Panc1 (cell line): ENCODE measurements at regions of chr6 and their contacts with region 1.

Region 1: GRCh38 chr6:34070315-34071135 is 75.4 kb downstream of the GRM4 start:
- DNase-seq: no peak
- ATAC-seq: 0 out of 2 replicates have a peak, but pooled peaks have one; percentile 21
- H3K4me3 ChIP-seq: no peak overlapping the region
- H3K27ac ChIP-seq: no peak overlapping the region
- H3K4me1 ChIP-seq: 0 out of 2 replicates have a peak, but pooled peaks cover 2% of the 10 kb centered on the region
- H3K27me3 ChIP-seq: peaks cover 2% of the 10 kb centered on the region; the same call in 1 of the 2 replicates
- CTCF ChIP-seq: no peak

Region 2: DNA sequence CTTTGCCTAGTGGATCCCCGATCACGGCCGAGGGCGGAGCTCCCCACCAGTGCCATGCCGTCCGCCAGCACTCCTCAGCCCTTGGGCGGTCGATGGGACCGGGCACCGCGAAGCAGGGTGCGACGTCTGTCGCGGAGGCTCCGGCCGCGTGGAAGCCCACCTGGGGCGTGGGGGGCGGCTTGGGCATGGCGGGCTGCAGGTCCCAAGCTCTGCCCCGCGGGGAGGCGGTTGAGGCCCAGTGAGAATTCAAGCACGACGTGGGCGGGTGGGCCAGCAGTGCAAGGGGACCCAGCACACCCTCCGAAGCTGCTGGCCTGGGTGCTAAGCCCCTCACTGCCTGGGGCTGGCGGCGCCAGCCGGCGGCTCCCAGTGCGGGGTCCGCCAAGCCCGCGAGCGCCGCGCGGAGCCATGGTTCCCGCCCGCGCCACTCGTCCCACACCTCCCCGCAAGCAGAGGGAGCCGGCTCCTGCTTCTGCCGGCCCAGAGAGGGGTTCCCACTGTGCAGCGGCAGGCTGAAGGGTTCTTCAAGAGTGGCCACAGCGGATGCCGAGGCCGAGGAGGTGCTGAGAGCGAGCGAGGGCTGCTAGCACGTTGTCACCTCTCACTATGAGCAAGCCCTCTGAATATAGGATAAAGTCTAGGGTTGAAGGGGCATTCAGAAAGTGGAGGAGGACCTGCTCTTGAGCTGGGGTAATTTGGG is 53.3 kb before region 1 on chr6:
- CTCF ChIA-PET with region 1: no interaction called
- POLR2A ChIA-PET with region 1: interaction called, 10 read pairs
- in situ Hi-C with region 1: no loop called
- intact Hi-C with region 1: no loop called
- DNase-seq: no peak
- ATAC-seq: no peak
- H3K4me3 ChIP-seq: no peak overlapping the region
- H3K27ac ChIP-seq: no peak overlapping the region
- H3K4me1 ChIP-seq: 0 out of 2 replicates have a peak, but pooled peaks cover 3% of the 10 kb centered on the region
- H3K27me3 ChIP-seq: no peaks in the 10 kb centered on the region
- CTCF ChIP-seq: no peak